ENCODE measurements at regions of chr10 and their contacts with region 1.

Region 1: GRCh38 chr10:100009793-100010676 is at the start of gene DNMBP:
- DNase-seq: peak; percentile 61 to 87 (median 79)
- ATAC-seq: peak; percentile 95
- H3K4me3 ChIP-seq: peak within 1 kb of the TSS; percentile 69
- H3K4me3 Mint-ChIP-seq: peak within 1 kb of the TSS; percentile 85 to 98 (median 96)
- H3K27ac ChIP-seq: peak within 1 kb of the TSS; percentile 50
- H3K27ac Mint-ChIP-seq: peak within 1 kb of the TSS; percentile 40 to 96 (median 82)
- H3K4me1 ChIP-seq: peaks cover 10 to 12% of the 10 kb centered on the region in 2 donors
- H3K4me1 Mint-ChIP-seq: peaks cover 8 to 51% (median 40%) of the 10 kb centered on the region in 7 donors
- H3K27me3 ChIP-seq: no peaks in the 10 kb centered on the region
- H3K27me3 Mint-ChIP-seq: peaks cover 0 to 35% (median 0%) of the 10 kb centered on the region in 5 donors
- total RNA-seq, gene DNMBP: 2.8 to 8.5 (median 4.4) TPM

Region 2: GRCh38 chr10:99430451-99431189 is 579.4 kb before region 1 on chr10 and contains the start of gene GOT1:
- CTCF ChIA-PET with region 1: no interaction called
- POLR2A ChIA-PET with region 1: no interaction called
- intact Hi-C with region 1: loop called in 1 of 2 experiments (anchors 1 kb)
- DNase-seq: peak; percentile 72 to 95 (median 94)
- ATAC-seq: peak; percentile 97
- H3K4me3 ChIP-seq: peak within 1 kb of the TSS; percentile 81
- H3K4me3 Mint-ChIP-seq: peak within 1 kb of the TSS; percentile 94 to 100 (median 98)
- H3K27ac ChIP-seq: peak within 1 kb of the TSS; percentile 90
- H3K27ac Mint-ChIP-seq: peak within 1 kb of the TSS; percentile 88 to 97 (median 94)
- H3K4me1 ChIP-seq: peaks cover 5 to 9% of the 10 kb centered on the region in 2 donors
- H3K4me1 Mint-ChIP-seq: peaks cover 19 to 53% (median 44%) of the 10 kb centered on the region in 7 donors
- H3K27me3 ChIP-seq: no peaks in the 10 kb centered on the region
- H3K27me3 Mint-ChIP-seq: no peaks in the 10 kb centered on the region
- total RNA-seq, gene GOT1: 8.0 to 22.2 (median 10.2) TPM

Region 3: GRCh38 chr10:99732033-99732912 is 277.8 kb before region 1 on chr10 and contains the starts of genes COX15 and CUTC:
- CTCF ChIA-PET with region 1: interaction called, 3 read pairs
- POLR2A ChIA-PET with region 1: interaction called, 5 read pairs
- intact Hi-C with region 1: loop called (anchors 1 kb)
- DNase-seq: peak; percentile 89 to 95 (median 94)
- ATAC-seq: peak; percentile 95
- H3K4me3 ChIP-seq: peak within 1 kb of the TSS; percentile 94
- H3K4me3 Mint-ChIP-seq: peak within 1 kb of the TSS; percentile 95 to 100 (median 98)
- H3K27ac ChIP-seq: peak within 1 kb of the TSS; percentile 83
- H3K27ac Mint-ChIP-seq: peak within 1 kb of the TSS; percentile 98 to 100 (median 99)
- H3K4me1 ChIP-seq: peaks cover 11 to 19% of the 10 kb centered on the region in 2 donors
- H3K4me1 Mint-ChIP-seq: peaks cover 28 to 79% (median 52%) of the 10 kb centered on the region in 7 donors
- H3K27me3 ChIP-seq: no peaks in the 10 kb centered on the region
- H3K27me3 Mint-ChIP-seq: no peaks in the 10 kb centered on the region
- total RNA-seq, gene COX15: 17.6 to 43.5 (median 32.9) TPM
- total RNA-seq, gene CUTC: 19.3 to 37.1 (median 25.0) TPM

Region 4: DNA sequence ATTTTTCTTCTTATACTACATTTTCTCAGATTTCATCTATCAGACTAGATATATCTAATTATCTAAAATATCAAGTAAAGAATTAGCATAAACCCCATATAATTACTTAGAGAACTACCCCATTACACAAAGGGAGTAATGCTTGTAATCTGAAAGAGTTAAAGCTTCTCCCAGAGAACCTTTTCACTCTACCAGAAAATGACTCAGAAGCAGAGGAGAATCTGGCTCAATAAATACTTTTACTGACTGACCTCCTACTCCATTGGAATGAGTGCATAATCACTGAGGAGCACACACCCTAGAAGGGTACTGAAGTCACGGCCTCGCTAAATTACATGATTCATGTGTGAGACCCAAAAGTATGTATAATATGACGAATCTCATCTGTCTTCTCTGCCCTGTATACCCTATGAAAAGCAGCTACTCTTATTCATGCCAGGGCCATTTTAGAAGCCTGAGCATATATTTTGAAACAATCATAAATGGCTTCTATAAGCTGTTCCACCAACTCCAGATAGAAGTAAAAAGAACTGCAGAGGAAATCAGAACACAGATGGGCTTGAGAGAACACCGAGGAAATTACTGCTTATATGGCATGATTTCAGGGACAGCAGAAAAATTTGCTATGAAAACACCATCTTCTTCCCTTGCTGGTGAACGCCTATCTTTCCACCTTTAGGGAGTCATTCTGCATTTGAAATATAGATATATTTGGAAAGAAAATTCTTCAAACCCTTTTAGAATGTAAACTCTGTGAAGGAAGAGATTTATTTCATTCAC is 33.0 kb before region 1 on chr10:
- CTCF ChIA-PET with region 1: no interaction called
- POLR2A ChIA-PET with region 1: no interaction called
- intact Hi-C with region 1: loop called (anchors 2 to 5 kb)
- DNase-seq: no peak
- ATAC-seq: no peak
- H3K4me3 ChIP-seq: no peak overlapping the region
- H3K4me3 Mint-ChIP-seq: no peak overlapping the region
- H3K27ac ChIP-seq: no peak overlapping the region
- H3K27ac Mint-ChIP-seq: no peak overlapping the region
- H3K4me1 ChIP-seq: no peaks in the 10 kb centered on the region
- H3K4me1 Mint-ChIP-seq: peaks cover 0 to 7% (median 0%) of the 10 kb centered on the region in 7 donors
- H3K27me3 ChIP-seq: no peaks in the 10 kb centered on the region
- H3K27me3 Mint-ChIP-seq: no peaks in the 10 kb centered on the region

Measured in naive thymus-derived CD4-positive, alpha-beta T cell (primary cell).